ENCODE measurements at regions of chr4 and their contacts with region 1.

Region 1: GRCh38 chr4:145732895-145733880 is 53.2 kb downstream of the C4orf51 start:
- DNase-seq: peak; percentile 94 to 97
- H3K4me3 ChIP-seq: peak overlapping the region; percentile 64 to 81 (median 69)
- H3K27ac ChIP-seq: peak overlapping the region; percentile 99 to 100
- H3K4me1 ChIP-seq: peaks cover 7 to 24% of the 10 kb centered on the region in 2 donors
- H3K27me3 ChIP-seq: no peaks in the 10 kb centered on the region
- CTCF ChIP-seq: peak in 1 of 3 donors; percentile 7
- POLR2A ChIP-seq: peak; percentile 88

Region 2: GRCh38 chr4:145887241-145887991 is 154.2 kb after region 1 on chr4:
- intact Hi-C with region 1: loop called (anchors 5 kb)
- DNase-seq: no peak
- H3K4me3 ChIP-seq: no peak overlapping the region
- H3K27ac ChIP-seq: peak overlapping the region; percentile 42 to 64
- H3K4me1 ChIP-seq: no peaks in the 10 kb centered on the region
- H3K27me3 ChIP-seq: no peaks in the 10 kb centered on the region
- CTCF ChIP-seq: no peak
- POLR2A ChIP-seq: no peak

Region 3: GRCh38 chr4:146998157-146998556 is 1265.0 kb after region 1 on chr4:
- intact Hi-C with region 1: no loop called
- DNase-seq: no peak
- H3K4me3 ChIP-seq: no peak overlapping the region
- H3K27ac ChIP-seq: no peak overlapping the region
- H3K4me1 ChIP-seq: no peaks in the 10 kb centered on the region
- H3K27me3 ChIP-seq: no peaks in the 10 kb centered on the region
- CTCF ChIP-seq: no peak
- POLR2A ChIP-seq: no peak

Measured in breast epithelium (tissue), 4 donors.